IMR-90 (cell line): ENCODE measurements at regions of chr1 and their contacts with region 1.

Region 1: DNA sequence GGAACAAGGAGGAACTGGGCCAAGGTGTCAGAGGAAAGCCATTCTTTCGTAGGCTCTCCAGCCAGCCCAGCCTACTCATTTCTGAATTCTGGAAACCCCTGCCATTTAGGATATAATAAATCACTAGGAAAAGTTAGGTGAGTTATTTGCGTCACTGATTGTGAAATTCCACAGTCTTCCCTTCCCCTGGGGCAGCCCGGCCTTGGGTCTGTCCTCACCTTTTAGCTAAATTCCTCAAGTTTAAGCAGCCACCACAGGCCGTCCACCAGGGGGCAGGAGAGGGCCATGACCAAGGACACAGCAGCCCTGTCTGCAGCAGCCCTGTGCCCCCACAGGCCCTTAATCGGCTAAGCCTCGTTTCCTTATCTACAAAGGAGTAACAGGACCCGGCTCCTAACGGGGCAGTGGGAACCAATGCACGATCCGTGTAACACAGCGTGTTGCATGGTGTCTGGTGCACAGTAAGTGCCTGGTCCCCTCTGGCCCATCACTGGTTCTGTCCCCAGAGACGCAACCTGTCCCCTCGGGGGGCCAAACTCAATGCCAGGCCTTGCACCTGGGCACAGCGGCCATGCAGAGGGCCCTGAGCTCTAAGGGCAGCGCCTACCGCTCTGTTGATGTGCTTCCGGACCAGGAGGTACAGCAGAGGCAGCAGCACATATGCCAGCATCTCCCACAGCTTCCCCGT is 18.1 kb downstream of the GPR157 start:
- DNase-seq: peak; percentile 87
- ATAC-seq: peak; percentile 97
- H3K4me3 ChIP-seq: no peak overlapping the region
- H3K27ac ChIP-seq: no peak overlapping the region
- H3K4me1 ChIP-seq: peaks cover 2% of the 10 kb centered on the region; the same call in 1 of the 2 replicates
- H3K27me3 ChIP-seq: no peaks in the 10 kb centered on the region
- CTCF ChIP-seq: peak; percentile 91
- POLR2A ChIP-seq: no peak
- RAD21 ChIP-seq: peak; percentile 89

Region 2: GRCh38 chr1:9196129-9197040 is 85.6 kb after region 1 on chr1:
- CTCF ChIA-PET with region 1: interaction called, 7 read pairs
- POLR2A ChIA-PET with region 1: no interaction called
- dilution Hi-C with region 1: no loop called
- in situ Hi-C with region 1: loop called (anchors 5 kb)
- intact Hi-C with region 1: loop called (anchors 1 kb)
- DNase-seq: peak; percentile 94
- ATAC-seq: peak; percentile 68
- H3K4me3 ChIP-seq: peak overlapping the region; percentile 2; the same call in 1 of the 2 replicates
- H3K27ac ChIP-seq: peak overlapping the region; percentile 71
- H3K4me1 ChIP-seq: peaks cover 30% of the 10 kb centered on the region
- H3K27me3 ChIP-seq: no peaks in the 10 kb centered on the region
- CTCF ChIP-seq: peak; percentile 76
- POLR2A ChIP-seq: no peak
- RAD21 ChIP-seq: peak; percentile 77

Region 3: GRCh38 chr1:9249534-9250410 is 139.0 kb after region 1 on chr1:
- CTCF ChIA-PET with region 1: interaction called, 3 read pairs
- POLR2A ChIA-PET with region 1: no interaction called
- dilution Hi-C with region 1: no loop called
- in situ Hi-C with region 1: no loop called
- intact Hi-C with region 1: loop called (anchors 1 kb)
- DNase-seq: peak; percentile 44
- ATAC-seq: peak; percentile 83
- H3K4me3 ChIP-seq: no peak overlapping the region
- H3K27ac ChIP-seq: no peak overlapping the region
- H3K4me1 ChIP-seq: peaks cover 10% of the 10 kb centered on the region; the same call in 1 of the 2 replicates
- H3K27me3 ChIP-seq: no peaks in the 10 kb centered on the region
- CTCF ChIP-seq: peak; percentile 69
- POLR2A ChIP-seq: no peak
- RAD21 ChIP-seq: peak; percentile 78

Region 4: GRCh38 chr1:9269078-9269501 is 158.3 kb after region 1 on chr1:
- CTCF ChIA-PET with region 1: no interaction called
- POLR2A ChIA-PET with region 1: no interaction called
- dilution Hi-C with region 1: no loop called
- in situ Hi-C with region 1: no loop called
- intact Hi-C with region 1: loop called (anchors 5 kb)
- DNase-seq: no peak
- ATAC-seq: no peak
- H3K4me3 ChIP-seq: no peak overlapping the region
- H3K27ac ChIP-seq: no peak overlapping the region
- H3K4me1 ChIP-seq: peaks cover 6% of the 10 kb centered on the region
- H3K27me3 ChIP-seq: no peaks in the 10 kb centered on the region
- CTCF ChIP-seq: no peak
- POLR2A ChIP-seq: no peak
- RAD21 ChIP-seq: no peak

Region 5: GRCh38 chr1:9455487-9456234 is 344.8 kb after region 1 on chr1:
- CTCF ChIA-PET with region 1: no interaction called
- POLR2A ChIA-PET with region 1: no interaction called
- dilution Hi-C with region 1: no loop called
- in situ Hi-C with region 1: no loop called
- intact Hi-C with region 1: loop called (anchors 2 kb)
- DNase-seq: peak; percentile 56
- ATAC-seq: peak; percentile 92
- H3K4me3 ChIP-seq: no peak overlapping the region
- H3K27ac ChIP-seq: no peak overlapping the region
- H3K4me1 ChIP-seq: no peaks in the 10 kb centered on the region
- H3K27me3 ChIP-seq: peaks cover 8% of the 10 kb centered on the region
- CTCF ChIP-seq: peak; percentile 89
- POLR2A ChIP-seq: no peak
- RAD21 ChIP-seq: peak; percentile 94